Panc1 (cell line): ENCODE measurements at regions of chr3 and their contacts with region 1.

Region 1: GRCh38 chr3:145639875-145640274 is 521.1 kb downstream of the PLOD2 start:
- DNase-seq: no peak
- ATAC-seq: no peak
- H3K4me3 ChIP-seq: no peak overlapping the region
- H3K27ac ChIP-seq: no peak overlapping the region
- H3K4me1 ChIP-seq: no peaks in the 10 kb centered on the region
- H3K27me3 ChIP-seq: no peaks in the 10 kb centered on the region
- CTCF ChIP-seq: no peak

Region 2: DNA sequence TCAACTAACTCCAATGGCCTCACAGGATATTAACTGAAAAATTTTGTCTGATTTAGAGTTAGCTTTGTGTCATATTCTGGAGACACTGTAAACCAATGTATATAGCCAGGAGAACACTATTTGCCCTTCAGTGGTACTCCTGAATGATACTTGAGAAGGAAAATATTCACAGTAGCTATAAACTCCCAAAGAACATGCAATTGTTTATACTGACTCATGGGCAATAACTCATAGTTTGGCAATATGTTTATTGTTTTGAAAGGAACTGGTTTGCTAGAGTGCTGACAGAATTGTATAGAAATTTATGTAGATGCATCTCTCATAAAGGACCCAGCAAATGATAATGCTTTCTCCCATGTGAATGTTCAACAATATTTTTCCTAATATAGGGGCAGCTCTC is 16.5 kb before region 1 on chr3:
- CTCF ChIA-PET with region 1: no interaction called
- POLR2A ChIA-PET with region 1: no interaction called
- in situ Hi-C with region 1: no loop called
- intact Hi-C with region 1: loop called (anchors 1 kb)
- DNase-seq: no peak
- ATAC-seq: no peak
- H3K4me3 ChIP-seq: no peak overlapping the region
- H3K27ac ChIP-seq: no peak overlapping the region
- H3K4me1 ChIP-seq: no peaks in the 10 kb centered on the region
- H3K27me3 ChIP-seq: no peaks in the 10 kb centered on the region
- CTCF ChIP-seq: no peak

Region 3: GRCh38 chr3:145678401-145678800 is 38.5 kb after region 1 on chr3:
- CTCF ChIA-PET with region 1: no interaction called
- POLR2A ChIA-PET with region 1: no interaction called
- in situ Hi-C with region 1: no loop called
- intact Hi-C with region 1: no loop called
- DNase-seq: no peak
- ATAC-seq: no peak
- H3K4me3 ChIP-seq: no peak overlapping the region
- H3K27ac ChIP-seq: no peak overlapping the region
- H3K4me1 ChIP-seq: no peaks in the 10 kb centered on the region
- H3K27me3 ChIP-seq: no peaks in the 10 kb centered on the region
- CTCF ChIP-seq: no peak

Region 4: DNA sequence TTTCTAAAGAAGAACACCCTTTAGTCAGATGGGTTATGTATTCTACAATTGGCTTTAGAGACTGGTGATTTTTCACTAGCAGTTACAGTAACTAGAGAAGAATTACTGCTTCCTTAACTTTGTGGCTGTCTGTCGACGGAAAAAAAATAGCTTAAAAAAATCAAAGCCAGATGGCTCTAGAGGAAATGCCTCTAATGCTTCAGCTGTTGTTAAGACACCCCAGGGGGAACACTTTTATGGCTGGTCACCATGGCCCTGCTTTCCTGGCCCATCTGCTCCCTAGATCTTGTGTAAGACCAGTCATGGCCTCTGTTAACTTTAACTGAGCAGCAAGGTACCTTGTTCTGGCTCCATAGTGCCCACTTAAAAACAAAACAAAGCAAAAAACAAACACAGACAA is 1163.9 kb after region 1 on chr3:
- CTCF ChIA-PET with region 1: no interaction called
- POLR2A ChIA-PET with region 1: no interaction called
- in situ Hi-C with region 1: no loop called
- intact Hi-C with region 1: no loop called
- DNase-seq: no peak
- ATAC-seq: no peak
- H3K4me3 ChIP-seq: no peak overlapping the region
- H3K27ac ChIP-seq: no peak overlapping the region
- H3K4me1 ChIP-seq: no peaks in the 10 kb centered on the region
- H3K27me3 ChIP-seq: no peaks in the 10 kb centered on the region
- CTCF ChIP-seq: no peak